Aorta (tissue), 5 donors: ENCODE measurements at regions of chr4 and their contacts with region 1.

Region 1: DNA sequence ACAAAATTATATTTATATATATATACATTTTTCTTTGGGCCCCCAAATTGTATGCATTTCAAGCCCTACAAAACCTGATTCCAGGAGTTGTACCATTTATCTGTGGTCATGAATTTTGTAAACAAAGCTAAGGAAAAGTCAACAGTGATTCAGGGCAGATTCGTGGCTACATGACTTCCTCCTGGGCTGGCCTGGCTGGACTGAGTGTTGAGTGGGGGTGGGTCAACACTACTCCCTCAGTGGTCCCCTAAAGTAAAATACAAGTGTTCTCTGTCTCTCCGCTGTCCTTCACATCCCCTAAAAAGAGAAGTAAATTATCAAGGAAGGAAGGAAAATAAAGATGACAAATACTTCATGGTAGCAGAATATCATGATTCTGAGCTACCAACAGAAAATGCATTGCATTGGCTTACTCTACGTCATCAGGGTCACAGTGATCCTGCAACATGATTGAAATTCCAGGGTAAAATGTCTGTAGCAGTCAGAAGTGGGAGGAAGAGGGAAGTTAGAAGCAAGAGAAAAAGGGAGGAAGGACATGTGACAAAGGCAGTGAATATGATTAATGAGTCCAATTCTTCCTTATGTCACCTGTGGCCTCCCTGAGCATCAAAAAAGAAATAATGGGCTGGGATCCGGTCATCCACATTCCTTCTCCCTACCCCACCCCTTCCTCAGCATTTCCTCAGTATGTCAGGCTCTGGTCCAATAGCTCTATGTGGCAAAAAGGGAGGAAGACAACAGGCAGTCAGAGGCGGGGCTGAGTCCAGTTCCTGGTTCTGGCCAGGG is 42.4 kb upstream of the MYOZ2 start:
- DNase-seq: no peak
- ATAC-seq: no peak
- H3K4me3 ChIP-seq: no peak overlapping the region
- H3K27ac ChIP-seq: no peak overlapping the region
- H3K4me1 ChIP-seq: no peaks in the 10 kb centered on the region
- H3K27me3 ChIP-seq: no peaks in the 10 kb centered on the region

Region 2: DNA sequence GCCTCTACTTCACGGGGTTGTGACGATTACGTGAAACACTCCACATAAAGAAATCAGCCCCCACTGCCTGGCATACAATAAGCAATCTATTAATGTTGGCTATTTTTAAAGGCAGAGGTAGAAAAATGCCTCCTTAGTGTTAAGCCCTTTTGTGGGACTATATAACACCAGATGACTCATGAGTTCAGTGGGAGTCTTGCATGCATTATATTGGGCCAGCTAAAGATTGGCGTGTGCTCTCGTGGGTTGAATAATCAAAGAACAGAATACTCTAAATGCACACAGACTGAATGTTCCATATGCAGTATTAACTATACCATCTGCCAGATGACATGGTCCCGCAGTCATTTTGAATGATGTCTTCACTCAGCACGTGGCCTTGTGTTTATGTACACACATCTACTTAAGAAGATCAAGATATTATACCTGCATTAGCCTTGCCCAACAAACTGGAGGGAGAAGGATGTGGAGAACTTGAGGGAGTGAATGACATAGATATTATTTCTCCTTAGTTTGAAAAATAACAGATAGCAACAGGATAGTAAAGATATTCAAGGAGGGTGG is 42.6 kb before region 1 on chr4:
- intact Hi-C with region 1: loop called in 1 of 2 experiments (anchors 5 kb)
- DNase-seq: no peak
- ATAC-seq: no peak
- H3K4me3 ChIP-seq: no peak overlapping the region
- H3K27ac ChIP-seq: no peak overlapping the region
- H3K4me1 ChIP-seq: peaks cover 4 to 8% of the 10 kb centered on the region in 2 donors
- H3K27me3 ChIP-seq: no peaks in the 10 kb centered on the region